HepG2 (cell line): ENCODE measurements at regions of chr16 and their contacts with region 1.

Region 1: GRCh38 chr16:67672739-67673662 is 6.4 kb downstream of the C16orf86 start:
- DNase-seq: peak; percentile 72
- ATAC-seq: peak; percentile 45
- H3K4me3 ChIP-seq: no peak overlapping the region
- H3K27ac ChIP-seq: no peak overlapping the region
- H3K4me1 ChIP-seq: peaks cover 21% of the 10 kb centered on the region
- H3K27me3 ChIP-seq: no peaks in the 10 kb centered on the region
- CTCF ChIP-seq: peak; percentile 95
- EP300 ChIP-seq: no peak
- POLR2A ChIP-seq: no peak
- RAD21 ChIP-seq: peak; percentile 93

Region 2: DNA sequence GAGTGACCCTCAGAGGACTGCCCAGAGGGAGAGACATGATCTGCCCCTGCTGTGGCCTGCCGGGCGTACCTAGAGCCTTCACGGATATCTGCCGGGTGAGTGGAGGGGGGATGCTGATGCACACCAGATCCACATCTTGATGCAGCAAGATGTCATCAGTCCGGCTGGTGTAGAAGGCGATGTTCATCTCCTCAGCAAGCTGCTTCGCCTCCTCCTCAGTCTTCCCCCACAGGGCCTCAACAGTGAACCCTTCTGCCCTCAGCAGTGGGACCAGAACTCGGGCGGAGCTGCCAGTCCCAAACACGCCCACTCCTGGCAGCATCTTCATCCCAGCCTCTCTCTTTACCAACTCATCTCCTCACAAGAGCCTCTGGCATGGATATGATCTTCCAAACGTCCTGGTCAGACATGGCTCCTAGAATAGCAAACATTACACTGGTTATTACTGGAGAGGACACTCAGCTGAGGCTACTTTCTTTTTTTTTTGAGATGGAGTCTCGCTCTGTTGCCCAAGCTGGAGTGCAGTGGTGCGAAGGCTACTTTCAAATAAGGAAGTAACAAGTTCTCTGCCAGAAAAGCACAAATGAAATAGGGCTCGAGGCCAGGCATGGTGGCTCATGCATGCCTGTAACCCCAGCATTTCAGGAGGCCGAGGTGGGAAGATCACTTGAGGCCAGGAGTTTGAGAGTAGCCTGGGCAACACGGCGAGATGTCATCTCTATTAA is 12.5 kb after region 1 on chr16:
- CTCF ChIA-PET with region 1: no interaction called
- POLR2A ChIA-PET with region 1: no interaction called
- in situ Hi-C with region 1: no loop called
- intact Hi-C with region 1: no loop called
- DNase-seq: no peak
- ATAC-seq: no peak
- H3K4me3 ChIP-seq: no peak overlapping the region
- H3K27ac ChIP-seq: no peak overlapping the region
- H3K4me1 ChIP-seq: no peaks in the 10 kb centered on the region
- H3K27me3 ChIP-seq: no peaks in the 10 kb centered on the region
- CTCF ChIP-seq: no peak
- EP300 ChIP-seq: no peak
- POLR2A ChIP-seq: no peak
- RAD21 ChIP-seq: no peak

Region 3: GRCh38 chr16:67703626-67704025 is 30.6 kb after region 1 on chr16:
- CTCF ChIA-PET with region 1: no interaction called
- POLR2A ChIA-PET with region 1: no interaction called
- in situ Hi-C with region 1: no loop called
- intact Hi-C with region 1: no loop called
- DNase-seq: no peak
- ATAC-seq: no peak
- H3K4me3 ChIP-seq: no peak overlapping the region
- H3K27ac ChIP-seq: no peak overlapping the region
- H3K4me1 ChIP-seq: no peaks in the 10 kb centered on the region
- H3K27me3 ChIP-seq: no peaks in the 10 kb centered on the region
- CTCF ChIP-seq: no peak
- EP300 ChIP-seq: no peak
- POLR2A ChIP-seq: no peak
- RAD21 ChIP-seq: no peak

Region 4: GRCh38 chr16:67865316-67865715 is 192.3 kb after region 1 on chr16:
- CTCF ChIA-PET with region 1: interaction called, 3 read pairs
- POLR2A ChIA-PET with region 1: no interaction called
- in situ Hi-C with region 1: no loop called
- intact Hi-C with region 1: loop called (anchors 1 kb)
- DNase-seq: peak; percentile 68
- ATAC-seq: peak; percentile 90
- H3K4me3 ChIP-seq: no peak overlapping the region
- H3K27ac ChIP-seq: no peak overlapping the region
- H3K4me1 ChIP-seq: no peaks in the 10 kb centered on the region
- H3K27me3 ChIP-seq: no peaks in the 10 kb centered on the region
- CTCF ChIP-seq: peak; percentile 84
- EP300 ChIP-seq: no peak
- POLR2A ChIP-seq: no peak
- RAD21 ChIP-seq: peak; percentile 91

Region 5: DNA sequence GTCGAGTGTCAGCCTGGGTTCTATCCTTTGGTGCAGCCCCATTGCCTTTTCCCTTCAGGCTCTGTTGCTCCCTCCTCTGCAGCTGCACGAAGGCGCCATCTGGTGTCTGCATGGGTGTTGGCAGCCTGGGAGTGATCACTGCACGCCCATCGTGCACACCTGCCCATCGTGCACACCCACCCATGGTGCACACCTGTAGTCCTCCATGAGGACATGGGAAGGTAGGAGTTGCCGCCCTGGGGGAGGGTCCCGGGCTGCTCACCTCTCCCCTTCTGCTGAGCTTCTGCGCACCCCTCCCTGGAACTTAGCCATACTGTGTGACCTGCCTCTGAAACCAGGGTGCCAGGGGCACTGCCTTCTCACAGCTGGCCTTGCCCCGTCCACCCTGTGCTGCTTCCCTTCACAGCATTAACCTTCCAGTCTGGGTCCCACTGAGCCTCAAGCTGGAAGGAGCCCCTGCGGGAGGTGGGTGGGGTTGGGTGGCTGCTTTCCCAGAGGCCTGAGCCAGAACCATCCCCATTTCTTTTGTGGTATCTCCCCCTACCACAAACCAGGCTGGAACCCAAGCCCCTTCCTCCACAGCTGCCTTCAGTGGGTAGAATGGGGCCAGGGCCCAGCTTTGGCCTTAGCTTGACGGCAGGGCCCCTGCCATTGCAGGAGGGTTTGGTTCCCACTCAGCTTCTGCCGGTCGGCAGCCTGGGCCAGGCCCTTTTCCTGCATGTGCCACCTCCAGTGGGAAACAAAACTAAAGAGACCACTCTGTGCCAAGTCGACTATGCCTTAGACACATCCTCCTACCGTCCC is 255.8 kb after region 1 on chr16:
- CTCF ChIA-PET with region 1: interaction called, 14 read pairs
- POLR2A ChIA-PET with region 1: no interaction called
- in situ Hi-C with region 1: loop called (anchors 10 kb)
- intact Hi-C with region 1: loop called (anchors 5 kb)
- DNase-seq: peak; percentile 69
- ATAC-seq: peak; percentile 71
- H3K4me3 ChIP-seq: no peak overlapping the region
- H3K27ac ChIP-seq: no peak overlapping the region
- H3K4me1 ChIP-seq: peaks cover 3% of the 10 kb centered on the region
- H3K27me3 ChIP-seq: no peaks in the 10 kb centered on the region
- CTCF ChIP-seq: peak; percentile 99
- EP300 ChIP-seq: no peak
- POLR2A ChIP-seq: 0 out of 4 replicates have a peak, but pooled peaks of 1 of the 2 experiments have one; percentile 8
- RAD21 ChIP-seq: peak; percentile 98